ENCODE measurements at regions of chr2 and their contacts with region 1.

Region 1: GRCh38 chr2:102005989-102006885 is 14.5 kb downstream of the IL1R2 start:
- DNase-seq: peak; percentile 32
- H3K4me3 ChIP-seq: no peak overlapping the region
- H3K27ac ChIP-seq: no peak overlapping the region
- H3K4me1 ChIP-seq: no peaks in the 10 kb centered on the region
- H3K27me3 ChIP-seq: no peaks in the 10 kb centered on the region
- CTCF ChIP-seq: peak in 3 of 4 experiments; percentile 31 to 59 (median 55)
- POLR2A ChIP-seq: no peak

Region 2: DNA sequence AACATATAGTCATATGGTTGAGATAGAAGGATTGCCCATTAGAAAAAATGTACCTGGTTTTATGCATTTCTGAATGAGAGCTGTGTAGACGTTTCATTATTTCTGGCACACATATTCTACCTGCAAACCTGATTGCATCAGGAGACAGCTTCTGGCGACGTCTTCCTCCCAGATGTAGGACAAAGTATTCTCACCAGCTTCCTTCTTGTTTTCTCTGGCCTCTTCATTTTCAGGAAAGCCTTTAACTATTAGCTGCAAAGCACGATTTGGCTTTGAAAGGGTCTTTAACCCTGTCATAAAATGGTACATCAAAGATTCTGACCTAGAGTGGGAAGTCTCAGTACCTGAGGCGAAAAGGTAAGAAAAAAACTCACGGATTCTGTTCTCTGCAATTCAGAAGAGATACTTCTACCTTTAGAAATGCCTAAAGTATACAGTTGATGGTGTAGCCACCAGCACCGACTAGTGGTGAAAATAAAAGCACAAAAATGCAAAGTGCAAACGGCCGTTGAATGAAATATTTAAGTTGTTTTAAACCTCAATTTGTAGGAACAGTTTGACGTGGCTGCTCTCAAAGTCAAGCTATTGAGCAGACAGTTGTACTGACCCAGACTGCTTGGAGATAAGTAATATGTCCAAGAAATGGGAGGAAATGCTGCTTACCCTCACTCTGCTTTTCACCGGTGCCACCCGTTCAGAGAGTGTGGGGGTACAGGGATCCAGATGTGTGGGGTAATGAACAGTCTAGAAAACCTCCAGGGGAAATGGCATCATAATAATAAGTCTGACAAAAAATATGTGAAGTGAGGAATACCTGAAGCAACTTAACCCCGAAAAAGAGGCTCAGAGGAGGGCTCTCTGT is 437.0 kb after region 1 on chr2:
- intact Hi-C with region 1: loop called (anchors 10 kb)
- DNase-seq: peak; percentile 28
- H3K4me3 ChIP-seq: no peak overlapping the region
- H3K27ac ChIP-seq: no peak overlapping the region
- H3K4me1 ChIP-seq: no peaks in the 10 kb centered on the region
- H3K27me3 ChIP-seq: no peaks in the 10 kb centered on the region
- CTCF ChIP-seq: peak; percentile 36 to 74 (median 60)
- POLR2A ChIP-seq: no peak

Measured in prostate gland (tissue), 2 donors.